Lower leg skin (tissue), 4 donors: ENCODE measurements at regions of chr14 and their contacts with region 1.

Region 1: DNA sequence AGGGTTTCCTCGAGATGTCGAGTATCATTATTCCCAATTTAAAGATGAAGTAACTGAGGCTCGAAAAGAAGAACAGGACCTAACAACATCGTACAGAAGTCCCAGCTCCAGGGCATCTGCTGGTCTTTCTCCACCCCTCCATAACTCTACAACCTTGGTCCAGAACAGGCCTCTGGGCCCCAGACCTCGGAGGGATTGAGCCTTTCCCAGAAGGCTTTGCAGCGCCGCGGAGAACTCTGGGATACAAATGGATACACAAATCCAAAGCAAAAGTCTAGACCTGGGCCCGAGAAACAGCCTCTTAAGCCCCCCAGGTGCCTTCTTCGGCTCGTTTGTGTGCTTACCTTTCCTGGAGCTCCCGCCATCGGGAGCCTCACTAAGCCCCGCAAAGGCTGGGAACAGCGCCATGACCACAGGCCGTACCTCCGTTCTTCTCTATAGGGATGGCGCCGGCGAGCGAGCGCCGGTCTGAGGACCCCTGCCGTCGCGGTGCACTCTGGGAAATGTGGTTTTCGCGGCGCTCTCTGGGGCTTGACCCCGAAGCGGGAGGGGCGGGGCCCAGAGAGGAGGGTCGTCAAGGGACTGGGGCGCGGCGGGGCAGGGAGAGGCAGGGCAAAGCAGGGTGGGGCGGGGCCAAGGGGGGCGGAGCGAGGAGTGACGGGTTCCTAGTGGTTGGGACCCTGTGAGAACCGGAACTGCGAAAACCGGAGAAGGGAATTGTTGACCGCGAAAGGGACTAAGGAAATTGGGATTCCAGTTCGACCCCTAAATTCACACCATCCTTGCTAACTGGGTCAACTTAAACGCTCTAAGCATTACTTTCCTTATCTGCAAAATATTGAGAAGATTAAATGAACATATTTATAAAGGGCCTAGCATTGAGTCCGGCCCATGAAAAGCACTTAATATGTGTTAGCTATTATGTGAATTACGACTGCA is at the start of gene NRDE2:
- DNase-seq: peak; percentile 98 to 100
- H3K4me3 ChIP-seq: peak within 1 kb of the TSS; percentile 51
- CTCF ChIP-seq: no peak
- POLR2A ChIP-seq: no peak
- total RNA-seq, gene NRDE2: 7.5 to 18.3 (median 10.2) TPM

Region 2: DNA sequence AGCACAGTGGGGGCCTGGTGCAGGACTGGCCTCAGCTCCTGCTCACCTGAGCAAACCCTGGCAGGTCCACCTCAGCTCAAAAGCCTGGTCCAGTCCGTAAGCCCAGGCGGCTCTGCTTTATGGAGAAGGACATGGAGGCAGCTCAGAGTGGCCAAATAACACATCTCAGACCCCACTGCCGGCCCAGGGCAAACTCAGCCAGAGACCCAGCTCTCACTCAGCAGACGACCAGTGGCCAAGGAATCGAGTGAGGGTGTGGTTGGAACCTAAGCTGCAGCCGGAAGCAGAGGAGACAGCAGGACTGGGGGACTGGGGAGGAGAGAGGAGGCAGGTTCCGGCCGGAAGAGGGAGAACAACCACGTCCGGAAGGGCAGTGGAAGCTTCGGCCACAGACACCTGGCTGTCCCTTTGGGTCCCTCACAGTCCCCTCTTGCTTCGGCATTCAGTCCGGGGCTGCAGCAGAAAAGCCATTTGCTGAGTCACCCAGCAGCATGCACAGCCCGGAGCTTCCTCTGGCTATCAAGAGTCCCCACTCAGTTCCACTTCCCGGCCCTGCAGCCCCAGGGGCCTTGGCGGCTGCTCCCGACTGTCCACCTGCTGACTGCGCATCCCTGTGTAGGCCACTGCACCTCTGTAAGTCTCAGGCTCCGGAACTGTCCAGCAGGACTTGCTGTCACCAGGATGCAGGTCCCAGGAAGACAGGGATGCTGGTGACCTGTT is 169.0 kb after region 1 on chr14:
- intact Hi-C with region 1: no loop called
- DNase-seq: peak in 1 of 2 donors; percentile 71
- H3K4me3 ChIP-seq: no peak overlapping the region
- CTCF ChIP-seq: no peak
- POLR2A ChIP-seq: no peak

Region 3: GRCh38 chr14:91501951-91502930 is 1170.5 kb after region 1 on chr14:
- intact Hi-C with region 1: loop called (anchors 5 kb)
- DNase-seq: no peak
- H3K4me3 ChIP-seq: no peak overlapping the region
- CTCF ChIP-seq: no peak
- POLR2A ChIP-seq: no peak